ENCODE measurements at regions of chr13 and their contacts with region 1.

Region 1: DNA sequence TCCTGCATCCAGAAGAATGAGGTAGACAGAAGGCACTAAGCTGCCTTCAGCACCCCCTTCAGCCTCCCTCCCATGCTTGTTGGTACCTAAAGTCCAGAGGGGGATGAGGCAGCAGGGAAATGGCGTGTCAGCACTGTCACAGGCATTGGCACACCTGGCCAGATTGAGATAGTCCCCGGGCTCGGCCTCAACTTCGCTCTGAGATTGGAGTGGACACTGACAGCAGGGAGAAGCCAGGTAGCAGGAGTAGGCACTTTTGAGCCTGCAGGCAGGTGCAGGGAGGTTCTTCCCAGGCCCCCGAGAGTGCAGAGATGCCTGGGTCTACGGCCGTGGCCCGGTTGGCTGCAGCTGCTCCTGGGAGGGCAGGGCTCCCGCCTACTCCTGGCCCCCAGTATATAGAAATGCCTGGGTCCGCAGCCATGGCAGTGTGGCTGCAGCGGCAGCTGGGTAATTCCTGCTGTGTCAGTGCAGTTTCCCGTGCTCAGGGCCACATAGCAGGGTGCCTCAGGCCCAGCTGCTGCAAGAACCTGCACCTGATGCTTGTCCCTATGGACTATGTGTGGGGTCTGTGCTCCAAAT is 160.3 kb downstream of the SLITRK6 start:
- DNase-seq: no peak
- H3K4me3 ChIP-seq: no peak overlapping the region
- H3K27ac ChIP-seq: no peak overlapping the region
- H3K4me1 ChIP-seq: no peaks in the 10 kb centered on the region
- H3K27me3 ChIP-seq: no peaks in the 10 kb centered on the region
- CTCF ChIP-seq: no peak

Region 2: GRCh38 chr13:85659493-85659892 is 20.6 kb after region 1 on chr13:
- CTCF ChIA-PET with region 1: no interaction called
- POLR2A ChIA-PET with region 1: interaction called, 10 read pairs
- intact Hi-C with region 1: no loop called
- DNase-seq: no peak
- H3K4me3 ChIP-seq: no peak overlapping the region
- H3K27ac ChIP-seq: no peak overlapping the region
- H3K4me1 ChIP-seq: no peaks in the 10 kb centered on the region
- H3K27me3 ChIP-seq: no peaks in the 10 kb centered on the region
- CTCF ChIP-seq: no peak